ENCODE measurements at regions of chr14 and their contacts with region 1.

Region 1: DNA sequence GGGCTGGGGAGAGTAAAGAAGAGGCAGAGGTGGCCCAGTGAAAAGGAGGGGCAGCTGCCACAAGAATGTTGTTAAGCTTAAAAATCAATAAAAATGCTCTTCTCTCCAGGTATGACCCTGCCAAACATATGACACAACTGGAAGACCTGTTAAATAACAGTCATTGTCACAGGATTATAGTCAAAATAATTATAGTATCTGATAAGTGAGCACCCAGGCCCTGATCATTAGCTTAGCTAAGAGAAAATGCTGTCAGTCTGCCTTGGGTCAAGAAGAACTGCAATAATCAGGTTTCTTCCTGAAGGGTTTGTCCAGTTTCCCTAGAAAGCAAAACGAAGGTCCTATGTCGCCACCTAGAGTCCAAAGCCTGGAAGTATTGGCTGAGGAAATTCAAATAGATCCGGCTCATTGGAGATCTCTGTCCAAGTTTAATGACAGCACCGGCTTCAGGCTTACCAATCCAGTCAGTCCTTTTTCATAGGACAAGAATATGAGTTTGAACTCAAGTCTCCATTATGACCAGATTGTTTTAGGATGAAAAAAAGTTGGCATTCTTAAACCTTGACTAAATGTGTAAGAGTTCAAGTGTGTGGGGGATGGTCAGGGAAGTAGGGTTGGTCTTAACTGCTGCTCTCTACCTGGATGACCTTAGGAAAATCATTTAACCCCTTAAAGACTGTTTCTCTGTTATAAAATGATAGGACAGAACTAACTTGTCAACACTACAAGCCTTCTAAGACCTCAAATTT is 22.5 kb upstream of the NKX2-8 start:
- DNase-seq: peak; percentile 90
- ATAC-seq: peak; percentile 84
- H3K4me3 ChIP-seq: no peak overlapping the region
- H3K27ac ChIP-seq: no peak overlapping the region
- H3K4me1 ChIP-seq: no peaks in the 10 kb centered on the region
- H3K27me3 ChIP-seq: peaks cover 42% of the 10 kb centered on the region
- CTCF ChIP-seq: peak; percentile 87

Region 2: DNA sequence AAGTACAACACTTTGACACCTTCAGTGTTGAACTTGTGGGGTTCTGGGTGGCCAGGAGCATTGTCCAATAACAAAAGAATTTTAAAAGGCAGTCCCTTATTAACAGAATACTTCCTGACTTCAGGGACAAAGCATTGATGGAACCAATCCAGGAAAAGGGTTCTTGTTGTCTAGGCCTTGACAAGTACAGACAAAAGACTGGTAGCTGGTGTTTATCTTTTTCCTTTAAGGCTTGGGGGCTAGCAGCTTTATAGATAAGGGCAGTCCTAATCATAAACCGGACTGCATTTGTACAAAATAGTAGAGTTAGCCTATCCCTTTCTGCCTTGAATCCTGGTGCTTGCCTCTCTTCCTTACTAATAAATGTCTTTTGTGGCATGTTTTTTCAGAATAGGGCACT is 1531.4 kb before region 1 on chr14:
- CTCF ChIA-PET with region 1: interaction called, 12 read pairs
- POLR2A ChIA-PET with region 1: no interaction called
- intact Hi-C with region 1: no loop called
- DNase-seq: no peak
- ATAC-seq: no peak
- H3K4me3 ChIP-seq: no peak overlapping the region
- H3K27ac ChIP-seq: no peak overlapping the region
- H3K4me1 ChIP-seq: no peaks in the 10 kb centered on the region
- H3K27me3 ChIP-seq: no peaks in the 10 kb centered on the region
- CTCF ChIP-seq: no peak

Region 3: DNA sequence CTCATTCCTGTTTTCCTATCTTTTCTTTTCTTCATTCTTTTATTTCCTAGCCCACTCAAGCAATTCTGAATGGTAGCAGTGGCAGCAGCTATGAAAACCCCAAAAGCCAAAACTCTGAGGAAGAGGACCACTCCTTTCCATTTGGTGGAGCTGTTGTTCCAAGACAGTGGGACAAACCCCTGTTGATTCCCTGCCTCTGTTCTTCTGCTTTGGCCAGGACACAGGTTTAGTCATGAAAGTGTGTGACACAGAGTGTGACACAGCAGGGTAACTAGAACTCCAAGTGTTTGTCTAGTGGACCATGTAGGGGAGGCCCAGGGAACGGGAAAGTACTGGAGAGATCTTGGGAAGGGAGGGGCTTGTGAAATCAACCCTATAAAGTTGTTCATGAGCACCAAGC is 499.5 kb before region 1 on chr14:
- CTCF ChIA-PET with region 1: interaction called, 13 read pairs
- POLR2A ChIA-PET with region 1: no interaction called
- intact Hi-C with region 1: no loop called
- DNase-seq: peak; percentile 61
- ATAC-seq: peak; percentile 83
- H3K4me3 ChIP-seq: no peak overlapping the region
- H3K27ac ChIP-seq: no peak overlapping the region
- H3K4me1 ChIP-seq: no peaks in the 10 kb centered on the region; the same call in 1 of the 2 replicates
- H3K27me3 ChIP-seq: peaks cover 75% of the 10 kb centered on the region
- CTCF ChIP-seq: peak; percentile 68

Region 4: GRCh38 chr14:36373982-36374673 is 230.8 kb before region 1 on chr14:
- CTCF ChIA-PET with region 1: no interaction called
- POLR2A ChIA-PET with region 1: no interaction called
- intact Hi-C with region 1: loop called (anchors 10 kb)
- DNase-seq: peak; percentile 93
- ATAC-seq: peak; percentile 99
- H3K4me3 ChIP-seq: no peak overlapping the region
- H3K27ac ChIP-seq: no peak overlapping the region
- H3K4me1 ChIP-seq: no peaks in the 10 kb centered on the region
- H3K27me3 ChIP-seq: 0 out of 2 replicates have a peak, but pooled peaks cover 5% of the 10 kb centered on the region
- CTCF ChIP-seq: peak; percentile 93

Region 5: DNA sequence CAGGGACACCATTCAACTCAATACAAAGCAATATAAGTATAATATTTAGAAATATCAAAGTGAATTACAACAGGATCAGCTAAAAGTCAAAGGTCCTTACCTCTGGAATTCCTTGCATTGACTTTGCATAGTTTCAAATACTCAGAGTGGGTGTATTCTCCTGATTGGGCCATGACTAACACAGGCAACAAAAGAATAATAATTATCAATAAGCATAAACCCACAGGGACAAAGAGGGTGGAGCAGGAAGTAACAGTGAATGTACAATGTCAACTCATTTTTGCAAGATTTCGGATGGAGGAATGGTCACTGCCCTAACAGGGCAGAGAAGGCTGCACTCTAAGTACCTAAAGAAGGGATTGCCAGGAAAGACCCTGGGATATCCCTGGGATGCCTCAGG is 264.2 kb after region 1 on chr14:
- CTCF ChIA-PET with region 1: interaction called, 19 read pairs
- POLR2A ChIA-PET with region 1: no interaction called
- intact Hi-C with region 1: no loop called
- DNase-seq: peak; percentile 7
- ATAC-seq: peak; percentile 38; the same call in 1 of the 2 replicates
- H3K4me3 ChIP-seq: no peak overlapping the region
- H3K27ac ChIP-seq: no peak overlapping the region
- H3K4me1 ChIP-seq: no peaks in the 10 kb centered on the region
- H3K27me3 ChIP-seq: no peaks in the 10 kb centered on the region
- CTCF ChIP-seq: no peak

Region 6: DNA sequence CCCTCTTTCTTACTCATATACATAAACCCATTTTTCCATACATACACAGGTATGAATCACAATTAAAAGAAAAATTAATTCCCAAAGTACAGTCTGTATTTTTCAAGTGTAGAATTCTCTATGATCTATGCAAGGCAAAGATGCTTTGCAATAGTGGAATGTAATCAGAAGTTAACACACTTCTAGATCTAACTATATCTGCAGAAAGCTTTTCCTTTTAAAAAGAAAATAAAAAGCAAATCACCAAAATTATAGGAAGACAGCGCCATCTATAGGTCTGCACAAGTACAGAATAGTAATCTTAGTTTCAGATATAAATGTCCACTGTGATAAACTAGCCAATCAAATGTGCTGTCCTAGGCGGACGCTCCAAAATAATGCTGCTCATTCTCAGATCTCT is 545.5 kb after region 1 on chr14:
- CTCF ChIA-PET with region 1: interaction called, 8 read pairs
- POLR2A ChIA-PET with region 1: no interaction called
- intact Hi-C with region 1: loop called (anchors 5 kb)
- DNase-seq: peak; percentile 76
- ATAC-seq: peak; percentile 82
- H3K4me3 ChIP-seq: no peak overlapping the region
- H3K27ac ChIP-seq: no peak overlapping the region
- H3K4me1 ChIP-seq: peaks cover 5% of the 10 kb centered on the region
- H3K27me3 ChIP-seq: no peaks in the 10 kb centered on the region
- CTCF ChIP-seq: peak; percentile 90

Measured in PC-3 (cell line).